Ascending aorta (tissue), 2 donors: ENCODE measurements at regions of chr14 and their contacts with region 1.

Region 1: GRCh38 chr14:99628832-99629618 is 15.9 kb upstream of the HHIPL1 start:
- DNase-seq: peak in 1 of 2 donors; percentile 82
- H3K4me3 ChIP-seq: no peak overlapping the region
- H3K27ac ChIP-seq: no peak overlapping the region
- H3K4me1 ChIP-seq: no peaks in the 10 kb centered on the region
- H3K27me3 ChIP-seq: no peaks in the 10 kb centered on the region
- CTCF ChIP-seq: peak; percentile 87 to 97 (median 92)

Region 2: DNA sequence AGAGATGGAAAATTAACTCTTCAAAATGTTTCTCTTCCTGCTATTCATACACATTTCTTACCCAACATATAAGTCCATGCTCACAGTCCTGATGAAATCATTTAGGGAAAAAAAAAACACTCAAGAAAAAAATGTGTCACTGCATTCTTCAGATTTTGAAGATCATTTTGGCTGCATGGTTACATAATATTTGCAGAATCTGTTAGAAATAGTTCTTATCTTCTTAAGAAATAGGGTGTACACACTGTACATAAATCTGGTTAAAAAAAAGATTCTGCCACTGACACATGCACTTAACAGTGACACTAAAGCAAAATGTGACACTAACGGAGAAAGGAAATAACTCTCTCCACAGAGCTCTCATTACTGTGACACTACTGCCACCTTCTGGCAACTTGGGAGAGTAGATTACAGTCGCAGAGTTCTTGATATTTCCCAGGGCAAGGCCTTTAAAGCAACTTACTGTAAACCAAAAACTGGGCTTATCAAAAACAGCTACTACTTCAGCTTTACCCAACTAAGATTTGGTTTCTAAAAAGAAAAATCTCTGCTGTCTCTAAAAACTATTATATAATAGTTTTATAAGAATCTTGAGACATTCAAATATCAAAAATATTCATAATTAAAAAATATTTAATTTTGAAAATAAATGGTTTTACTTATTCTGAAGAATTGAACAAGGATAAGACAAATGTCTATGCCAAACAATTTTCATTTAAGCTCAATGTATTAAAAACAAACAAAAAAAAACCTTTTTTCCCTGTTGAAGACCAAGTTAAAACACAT is 213.3 kb before region 1 on chr14:
- intact Hi-C with region 1: no loop called
- DNase-seq: no peak
- H3K4me3 ChIP-seq: no peak overlapping the region
- H3K27ac ChIP-seq: no peak overlapping the region
- H3K4me1 ChIP-seq: no peaks in the 10 kb centered on the region
- H3K27me3 ChIP-seq: no peaks in the 10 kb centered on the region
- CTCF ChIP-seq: peak; percentile 65 to 75 (median 71)

Region 3: DNA sequence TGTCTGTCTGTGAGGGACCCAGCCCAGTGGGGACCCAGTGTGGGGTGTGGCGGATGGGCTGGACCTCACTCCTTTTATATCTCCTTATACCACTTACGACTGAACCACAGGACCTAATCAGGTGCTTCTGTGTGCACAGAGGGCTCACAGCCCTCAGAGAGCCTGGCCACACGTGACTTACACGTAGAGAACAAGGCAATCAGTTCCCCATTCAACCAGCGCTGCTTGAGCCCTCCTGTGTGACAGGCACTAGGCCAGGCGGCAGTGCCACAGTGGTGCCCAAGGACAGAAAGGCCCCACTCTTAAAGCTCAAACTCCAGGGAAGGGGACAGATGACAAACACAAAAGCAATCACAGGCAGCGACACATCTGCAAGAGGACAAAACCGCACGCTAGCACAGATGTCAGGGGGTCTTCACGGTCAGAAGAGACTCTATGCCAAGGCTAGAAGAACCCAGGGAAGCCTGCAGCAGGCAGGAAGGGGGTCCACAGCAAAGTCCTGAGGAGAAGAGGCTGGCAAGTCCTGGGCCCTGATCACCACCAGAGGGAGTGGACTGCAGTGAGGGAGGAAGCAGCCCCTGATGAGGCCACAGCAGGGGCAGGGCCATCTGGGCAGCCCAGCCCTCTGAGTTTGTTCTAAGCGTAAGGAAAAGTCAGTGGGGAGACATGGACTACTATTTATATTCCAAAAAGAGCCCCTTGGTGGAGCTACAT is 187.7 kb before region 1 on chr14:
- intact Hi-C with region 1: no loop called
- DNase-seq: no peak
- H3K4me3 ChIP-seq: no peak overlapping the region
- H3K27ac ChIP-seq: no peak overlapping the region
- H3K4me1 ChIP-seq: no peaks in the 10 kb centered on the region
- H3K27me3 ChIP-seq: no peaks in the 10 kb centered on the region
- CTCF ChIP-seq: no peak

Region 4: GRCh38 chr14:99518441-99519346 is 110.3 kb before region 1 on chr14:
- intact Hi-C with region 1: loop called (anchors 1 kb)
- DNase-seq: peak in 1 of 2 donors; percentile 76
- H3K4me3 ChIP-seq: no peak overlapping the region
- H3K27ac ChIP-seq: no peak overlapping the region
- H3K4me1 ChIP-seq: no peaks in the 10 kb centered on the region
- H3K27me3 ChIP-seq: no peaks in the 10 kb centered on the region
- CTCF ChIP-seq: peak; percentile 87 to 94 (median 92)

Region 5: DNA sequence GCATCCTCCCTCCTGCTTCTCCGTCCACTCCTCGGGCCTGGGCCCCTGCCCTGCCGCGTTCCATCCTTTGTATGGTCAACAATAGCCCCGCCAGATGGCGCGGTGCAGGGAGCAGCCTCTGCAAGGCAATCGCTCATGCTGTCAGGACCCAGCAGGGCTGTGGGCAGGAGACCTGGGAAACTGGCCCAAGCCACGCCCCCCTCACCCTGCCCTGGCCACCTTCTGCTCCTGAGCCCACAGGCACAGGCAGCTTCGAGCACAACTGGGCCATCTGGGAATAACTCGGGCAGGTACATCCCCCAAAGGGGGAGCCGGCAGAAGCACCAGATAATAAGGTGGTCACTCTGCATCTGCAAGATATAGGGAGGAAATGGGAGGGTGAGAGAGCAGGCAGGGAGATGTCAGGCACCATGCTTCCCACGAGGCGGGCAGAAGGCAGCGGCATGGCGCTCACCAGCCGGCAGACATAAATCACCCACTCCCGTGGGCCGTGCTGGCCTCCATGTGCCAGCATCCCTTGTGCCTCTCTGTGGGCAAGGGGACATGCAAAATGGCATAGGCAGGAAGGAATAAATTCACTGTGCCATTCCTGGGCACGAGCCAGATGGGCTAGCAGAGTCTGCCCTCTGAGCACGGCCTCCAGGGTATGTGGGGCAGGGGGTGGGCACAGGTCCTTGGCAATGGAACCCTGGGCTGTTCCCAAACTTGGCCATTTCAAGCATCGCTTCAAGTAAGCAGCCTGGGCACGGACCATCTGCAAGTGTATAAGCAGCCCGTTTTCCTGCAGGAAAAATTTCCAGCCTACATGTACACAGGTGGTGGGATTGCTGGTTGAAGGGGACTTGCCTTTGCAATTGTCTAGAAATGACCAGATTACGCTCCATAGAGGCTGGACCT is 65.5 kb before region 1 on chr14:
- intact Hi-C with region 1: loop called (anchors 2 kb)
- DNase-seq: peak in 1 of 2 donors; percentile 80
- H3K4me3 ChIP-seq: no peak overlapping the region
- H3K27ac ChIP-seq: no peak overlapping the region
- H3K4me1 ChIP-seq: peaks cover 2 to 10% of the 10 kb centered on the region in 2 donors
- H3K27me3 ChIP-seq: no peaks in the 10 kb centered on the region
- CTCF ChIP-seq: peak in 2 of 3 experiments; percentile 35 to 45

Region 6: DNA sequence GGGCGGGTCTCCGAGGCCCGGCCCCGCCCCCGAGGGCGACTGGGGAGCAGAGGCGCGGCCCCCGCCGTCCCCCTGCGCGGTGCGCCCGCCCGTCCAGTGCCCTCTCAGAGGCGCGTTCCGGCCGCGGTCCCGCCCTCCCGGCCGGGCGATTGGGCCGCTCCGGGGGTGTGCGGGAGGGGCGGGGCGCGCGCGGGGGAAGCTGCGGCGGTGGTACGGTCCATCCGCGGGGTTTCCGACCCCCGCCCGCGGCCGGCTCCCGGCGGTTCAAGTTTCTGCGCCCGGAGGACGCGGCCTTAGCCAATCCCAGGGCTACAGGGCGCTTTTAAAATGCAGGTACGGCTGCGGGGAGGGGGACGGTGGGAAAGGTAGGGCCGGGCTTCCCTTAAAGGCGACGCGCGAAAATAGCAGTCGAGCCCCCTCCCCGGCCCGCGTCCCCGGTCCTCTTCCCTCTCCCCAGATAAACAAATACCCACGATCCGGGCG is 24.7 kb before region 1 on chr14:
- intact Hi-C with region 1: no loop called
- DNase-seq: peak; percentile 81 to 96
- H3K4me3 ChIP-seq: peak overlapping the region; percentile 78 to 81
- H3K27ac ChIP-seq: peak overlapping the region; percentile 77 to 81
- H3K4me1 ChIP-seq: peaks cover 4 to 8% of the 10 kb centered on the region in 2 donors
- H3K27me3 ChIP-seq: no peaks in the 10 kb centered on the region
- CTCF ChIP-seq: no peak

Region 7: DNA sequence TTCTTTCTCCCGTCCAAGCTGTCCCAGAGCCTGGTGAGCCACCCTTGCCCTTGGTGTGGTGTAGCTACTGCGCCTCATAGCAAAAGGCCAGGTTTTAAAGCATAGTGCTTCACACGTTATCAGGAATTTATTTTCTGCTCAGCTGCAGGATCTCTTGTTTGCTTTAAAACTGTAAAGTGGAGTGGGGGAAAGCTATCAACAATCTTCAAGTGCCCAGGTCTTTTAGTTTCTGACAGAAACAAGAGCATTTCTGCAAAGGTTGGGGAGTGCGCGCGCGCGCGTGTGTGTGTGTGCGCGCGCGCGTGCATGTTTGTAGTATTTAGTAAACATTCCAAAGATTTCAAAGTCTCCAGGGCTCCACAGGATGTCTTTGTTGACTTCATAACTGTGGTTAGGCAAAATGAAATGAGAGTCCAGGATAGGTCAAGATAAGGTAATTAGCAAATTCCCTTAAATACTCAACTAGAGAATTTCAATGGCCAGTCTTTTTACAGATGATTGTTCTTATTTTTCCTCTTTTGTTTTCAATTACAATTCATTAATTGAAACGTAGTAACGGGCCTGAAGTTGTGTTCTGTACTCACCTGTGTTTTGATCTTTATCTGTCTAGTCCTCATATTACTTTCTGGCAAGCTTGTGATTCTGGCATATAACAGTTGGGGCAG is 209.7 kb after region 1 on chr14:
- intact Hi-C with region 1: no loop called
- DNase-seq: no peak
- H3K4me3 ChIP-seq: no peak overlapping the region
- H3K27ac ChIP-seq: no peak overlapping the region
- H3K4me1 ChIP-seq: peaks cover 0 to 3% of the 10 kb centered on the region in 2 donors
- H3K27me3 ChIP-seq: no peaks in the 10 kb centered on the region
- CTCF ChIP-seq: no peak